ENCODE measurements at regions of chr17 and their contacts with region 1.

Region 1: DNA sequence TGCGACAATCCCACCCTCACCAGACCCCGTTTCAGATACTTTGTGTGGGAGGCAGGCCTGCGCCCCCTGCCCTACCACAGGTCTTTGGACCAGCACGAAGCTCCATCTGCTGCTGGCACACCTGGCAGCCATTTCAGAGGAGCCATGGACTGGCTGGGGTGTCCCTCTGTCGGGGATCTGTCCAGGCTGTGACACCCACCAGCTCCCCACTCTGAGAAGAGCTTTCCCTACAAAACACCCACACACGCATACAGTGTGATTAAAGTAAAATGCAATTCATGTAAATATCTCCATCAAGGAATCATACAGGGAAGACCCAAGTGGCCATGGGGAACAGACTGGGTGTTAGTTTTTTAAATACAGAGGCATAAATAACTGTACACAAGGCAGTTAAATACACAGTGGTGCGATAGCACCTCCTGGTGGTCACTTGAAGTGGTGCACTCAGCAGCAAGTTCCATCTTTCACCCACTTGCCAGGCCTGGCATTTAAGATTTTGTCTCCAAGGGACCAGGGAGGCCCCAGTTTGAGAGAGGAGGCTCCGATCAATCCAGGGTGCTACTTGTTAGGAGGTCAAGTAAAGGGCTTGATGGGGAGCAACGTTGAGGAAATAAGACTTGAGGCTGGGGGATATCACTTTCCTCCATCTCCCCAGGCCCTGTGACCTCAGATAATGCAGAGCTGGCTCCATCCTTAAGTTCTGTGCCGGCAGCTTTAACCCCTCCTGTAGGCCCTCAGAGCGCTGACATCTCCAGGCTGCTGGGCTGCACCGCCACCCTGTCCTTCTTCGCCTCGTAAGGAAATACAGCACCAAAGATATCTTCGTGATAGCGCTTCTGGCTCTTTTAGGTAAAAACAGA is 43.6 kb downstream of the NOS2 start:
- DNase-seq: peak; percentile 34 to 89 (median 75)
- H3K4me3 ChIP-seq: no peak overlapping the region
- H3K27ac ChIP-seq: no peak overlapping the region
- H3K4me1 ChIP-seq: no peaks in the 10 kb centered on the region
- H3K27me3 ChIP-seq: no peaks in the 10 kb centered on the region
- CTCF ChIP-seq: peak; percentile 92 to 98 (median 95)
- POLR2A ChIP-seq: no peak

Region 2: GRCh38 chr17:27529230-27529796 is 227.4 kb before region 1 on chr17:
- intact Hi-C with region 1: no loop called
- DNase-seq: peak in 1 of 7 donors; percentile 48
- H3K4me3 ChIP-seq: no peak overlapping the region
- H3K27ac ChIP-seq: peak overlapping the region in 1 of 5 donors; percentile 70
- H3K4me1 ChIP-seq: peaks cover 0 to 57% of the 10 kb centered on the region in 2 donors
- H3K27me3 ChIP-seq: no peaks in the 10 kb centered on the region
- CTCF ChIP-seq: peak in 1 of 6 experiments; percentile 10
- POLR2A ChIP-seq: no peak

Region 3: GRCh38 chr17:27609611-27610303 is 147.0 kb before region 1 on chr17:
- intact Hi-C with region 1: loop called in 1 of 2 experiments (anchors 5 kb)
- DNase-seq: peak; percentile 68 to 88 (median 77)
- H3K4me3 ChIP-seq: no peak overlapping the region
- H3K27ac ChIP-seq: peak overlapping the region in 3 of 5 donors; percentile 33 to 60 (median 33)
- H3K4me1 ChIP-seq: peaks cover 15 to 34% of the 10 kb centered on the region in 2 donors
- H3K27me3 ChIP-seq: no peaks in the 10 kb centered on the region
- CTCF ChIP-seq: peak; percentile 64 to 88 (median 80)
- POLR2A ChIP-seq: no peak

Region 4: DNA sequence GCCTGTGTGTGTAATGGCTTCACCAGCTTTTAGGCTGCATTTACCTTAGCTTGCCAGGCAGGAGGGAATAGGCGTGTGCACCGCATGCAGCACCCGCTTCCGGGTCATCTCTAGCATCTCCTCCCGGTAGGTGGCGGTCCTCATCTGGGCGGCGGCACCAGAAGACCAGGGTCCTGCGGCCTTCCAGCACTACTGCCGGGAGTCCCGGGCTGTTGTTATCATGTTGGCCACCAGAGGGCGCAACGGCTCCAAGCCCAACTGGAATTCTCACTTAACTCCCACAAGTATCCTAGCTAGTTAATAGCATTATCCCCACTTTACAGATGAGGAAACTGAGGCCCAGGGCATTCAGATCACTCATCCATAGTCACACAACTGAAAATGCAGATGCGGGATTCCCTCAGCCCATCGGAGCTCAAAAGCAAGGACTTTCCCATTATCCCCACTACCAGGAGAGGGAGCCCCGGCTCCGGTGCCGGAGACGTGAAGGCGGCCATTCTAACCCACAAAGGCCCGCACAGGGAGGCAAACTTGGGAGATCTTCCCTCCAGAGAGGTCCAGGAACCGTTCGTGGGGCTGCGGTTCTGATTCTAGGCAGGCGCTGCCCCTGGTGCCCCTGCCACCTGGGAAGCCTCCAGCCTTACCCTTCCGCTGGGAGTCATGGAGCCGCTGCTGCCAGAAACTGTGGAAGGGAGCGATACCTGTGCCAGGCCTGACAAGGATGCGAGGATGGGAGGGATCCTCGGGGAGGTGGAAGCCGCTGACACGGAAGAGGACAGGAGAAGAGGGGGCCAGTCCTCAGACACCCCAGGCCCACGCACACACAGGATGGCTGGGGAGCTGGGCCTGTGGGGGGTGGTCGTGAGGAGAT is 101.9 kb before region 1 on chr17:
- intact Hi-C with region 1: loop called (anchors 1 to 5 kb)
- DNase-seq: peak; percentile 67 to 91 (median 77)
- H3K4me3 ChIP-seq: no peak overlapping the region
- H3K27ac ChIP-seq: no peak overlapping the region
- H3K4me1 ChIP-seq: no peaks in the 10 kb centered on the region
- H3K27me3 ChIP-seq: no peaks in the 10 kb centered on the region
- CTCF ChIP-seq: peak; percentile 93 to 98 (median 97)
- POLR2A ChIP-seq: no peak

Region 5: GRCh38 chr17:27879987-27880608 is 123.4 kb after region 1 on chr17:
- intact Hi-C with region 1: loop called in 1 of 2 experiments (anchors 5 kb)
- DNase-seq: peak; percentile 72 to 88 (median 82)
- H3K4me3 ChIP-seq: no peak overlapping the region
- H3K27ac ChIP-seq: no peak overlapping the region
- H3K4me1 ChIP-seq: no peaks in the 10 kb centered on the region
- H3K27me3 ChIP-seq: no peaks in the 10 kb centered on the region
- CTCF ChIP-seq: peak; percentile 59 to 93 (median 86)
- POLR2A ChIP-seq: no peak

Measured in adrenal gland (tissue), 19 donors.